B cell (primary cell): ENCODE measurements at regions of chr7 and their contacts with region 1.

Region 1: DNA sequence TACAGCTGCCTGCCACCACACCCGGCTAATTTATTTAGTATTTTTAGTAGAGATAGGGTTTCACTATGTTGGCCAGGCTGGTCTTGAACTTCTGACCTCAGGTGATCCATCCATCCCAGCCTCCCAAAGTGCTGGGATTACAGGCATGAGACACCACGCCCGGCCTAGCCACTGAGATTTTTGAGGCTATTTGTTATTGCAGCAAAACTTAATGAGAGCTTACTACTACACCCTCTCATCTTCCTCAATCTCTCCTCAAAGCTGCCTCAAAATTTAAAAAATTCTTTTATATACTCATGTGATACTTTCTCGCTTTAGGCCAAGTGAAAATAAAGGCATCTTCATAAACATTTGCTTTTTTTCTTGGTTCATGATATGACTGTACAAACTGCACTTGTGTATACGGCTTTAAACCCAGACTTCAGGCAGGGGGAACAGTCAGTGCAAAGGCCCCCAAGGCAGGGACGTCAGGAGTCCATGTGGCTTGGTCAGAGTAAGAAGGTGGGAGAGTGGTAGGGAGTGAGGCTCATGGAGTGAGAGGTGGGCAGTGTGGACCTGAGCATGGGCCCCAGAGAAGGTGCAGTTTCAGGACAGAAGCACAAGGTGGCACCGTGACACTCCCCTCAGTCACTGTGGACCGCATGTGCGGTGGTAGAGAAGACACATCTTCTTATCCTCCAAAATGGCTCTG is 55.5 kb downstream of the SYPL1 start:
- DNase-seq: peak; percentile 87
- ATAC-seq: peak; percentile 46
- H3K4me3 ChIP-seq: no peak overlapping the region
- H3K4me3 Mint-ChIP-seq: peak overlapping the region; percentile 73
- H3K27ac ChIP-seq: peak overlapping the region; percentile 89 to 94
- H3K27ac Mint-ChIP-seq: peak overlapping the region; percentile 96
- H3K4me1 ChIP-seq: peaks cover 51 to 58% of the 10 kb centered on the region in 2 donors
- H3K4me1 Mint-ChIP-seq: peaks cover 60% of the 10 kb centered on the region
- H3K27me3 ChIP-seq: no peaks in the 10 kb centered on the region
- H3K27me3 Mint-ChIP-seq: no peaks in the 10 kb centered on the region
- CTCF ChIP-seq: peak; percentile 81

Region 2: GRCh38 chr7:106071356-106071998 is 14.8 kb after region 1 on chr7:
- CTCF ChIA-PET with region 1: interaction called, 147 read pairs
- POLR2A ChIA-PET with region 1: interaction called, 148 read pairs
- intact Hi-C with region 1: loop called (anchors 1 kb)
- DNase-seq: peak; percentile 90
- ATAC-seq: peak; percentile 87
- H3K4me3 ChIP-seq: peak overlapping the region in 4 of 5 experiments; percentile 33 to 66 (median 45)
- H3K4me3 Mint-ChIP-seq: peak overlapping the region; percentile 85
- H3K27ac ChIP-seq: peak overlapping the region; percentile 95 to 97
- H3K27ac Mint-ChIP-seq: peak overlapping the region; percentile 99
- H3K4me1 ChIP-seq: peaks cover 96 to 100% of the 10 kb centered on the region in 2 donors
- H3K4me1 Mint-ChIP-seq: peaks cover 94% of the 10 kb centered on the region
- H3K27me3 ChIP-seq: no peaks in the 10 kb centered on the region
- H3K27me3 Mint-ChIP-seq: no peaks in the 10 kb centered on the region
- CTCF ChIP-seq: no peak

Region 3: GRCh38 chr7:106089647-106090046 is 33.0 kb after region 1 on chr7:
- CTCF ChIA-PET with region 1: interaction called, 185 read pairs
- POLR2A ChIA-PET with region 1: interaction called, 21 read pairs
- intact Hi-C with region 1: loop called (anchors 1 kb)
- DNase-seq: peak; percentile 53
- ATAC-seq: peak; percentile 87
- H3K4me3 ChIP-seq: peak overlapping the region in 1 of 5 experiments; percentile 28
- H3K4me3 Mint-ChIP-seq: peak overlapping the region; percentile 72
- H3K27ac ChIP-seq: peak overlapping the region; percentile 63 to 77
- H3K27ac Mint-ChIP-seq: peak overlapping the region; percentile 92
- H3K4me1 ChIP-seq: peaks cover 37 to 69% of the 10 kb centered on the region in 2 donors
- H3K4me1 Mint-ChIP-seq: peaks cover 77% of the 10 kb centered on the region
- H3K27me3 ChIP-seq: no peaks in the 10 kb centered on the region
- H3K27me3 Mint-ChIP-seq: no peaks in the 10 kb centered on the region
- CTCF ChIP-seq: no peak

Region 4: DNA sequence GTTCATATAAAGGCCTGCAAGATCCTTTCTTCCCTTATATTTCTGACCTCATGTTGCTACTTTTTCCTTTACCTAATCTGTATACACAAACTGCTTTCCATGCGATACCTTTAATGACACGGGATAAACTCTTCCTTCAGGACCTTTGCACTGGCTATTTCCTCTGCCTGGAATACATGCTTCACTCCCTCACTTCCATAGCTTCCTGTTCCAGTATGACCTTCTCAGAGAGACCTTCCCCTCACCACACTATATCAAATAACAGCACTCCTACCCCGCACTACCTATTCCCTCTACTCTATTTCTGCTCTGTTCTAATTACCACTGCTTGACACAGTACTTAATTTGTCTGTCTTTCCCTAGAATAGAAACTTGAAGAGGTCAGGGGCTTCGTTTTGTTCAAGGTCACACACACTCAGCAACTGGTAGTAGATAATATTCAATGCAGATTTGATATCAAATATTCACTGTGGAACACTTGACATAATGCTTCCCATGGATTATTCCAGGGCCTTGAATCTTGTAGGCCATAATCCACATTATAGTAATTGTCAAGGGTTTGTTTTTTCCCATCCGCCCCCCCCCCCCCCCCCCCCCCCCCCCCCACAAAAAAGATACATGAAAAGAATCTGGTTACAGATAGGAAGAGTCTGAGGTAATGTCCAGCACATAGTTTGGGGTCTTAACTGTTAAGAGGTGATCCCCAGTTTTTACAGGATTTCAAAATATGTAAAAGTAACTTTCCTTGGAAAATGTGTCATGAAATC is 44.4 kb after region 1 on chr7:
- CTCF ChIA-PET with region 1: interaction called, 185 read pairs
- POLR2A ChIA-PET with region 1: interaction called, 21 read pairs
- intact Hi-C with region 1: no loop called
- DNase-seq: no peak
- ATAC-seq: no peak
- H3K4me3 ChIP-seq: no peak overlapping the region
- H3K4me3 Mint-ChIP-seq: peak overlapping the region; percentile 5
- H3K27ac ChIP-seq: peak overlapping the region in 1 of 2 donors; percentile 69
- H3K27ac Mint-ChIP-seq: peak overlapping the region; percentile 32
- H3K4me1 ChIP-seq: peaks cover 54 to 71% of the 10 kb centered on the region in 2 donors
- H3K4me1 Mint-ChIP-seq: peaks cover 76% of the 10 kb centered on the region
- H3K27me3 ChIP-seq: no peaks in the 10 kb centered on the region
- H3K27me3 Mint-ChIP-seq: no peaks in the 10 kb centered on the region
- CTCF ChIP-seq: no peak

Region 5: GRCh38 chr7:106117786-106118544 is 61.3 kb after region 1 on chr7:
- CTCF ChIA-PET with region 1: interaction called, 63 read pairs
- POLR2A ChIA-PET with region 1: interaction called, 37 read pairs
- intact Hi-C with region 1: no loop called
- DNase-seq: no peak
- ATAC-seq: no peak
- H3K4me3 ChIP-seq: no peak overlapping the region
- H3K4me3 Mint-ChIP-seq: no peak overlapping the region
- H3K27ac ChIP-seq: peak overlapping the region in 1 of 2 donors; percentile 86
- H3K27ac Mint-ChIP-seq: peak overlapping the region; percentile 92
- H3K4me1 ChIP-seq: peaks cover 48 to 49% of the 10 kb centered on the region in 2 donors
- H3K4me1 Mint-ChIP-seq: peaks cover 54% of the 10 kb centered on the region
- H3K27me3 ChIP-seq: no peaks in the 10 kb centered on the region
- H3K27me3 Mint-ChIP-seq: no peaks in the 10 kb centered on the region
- CTCF ChIP-seq: no peak

Region 6: DNA sequence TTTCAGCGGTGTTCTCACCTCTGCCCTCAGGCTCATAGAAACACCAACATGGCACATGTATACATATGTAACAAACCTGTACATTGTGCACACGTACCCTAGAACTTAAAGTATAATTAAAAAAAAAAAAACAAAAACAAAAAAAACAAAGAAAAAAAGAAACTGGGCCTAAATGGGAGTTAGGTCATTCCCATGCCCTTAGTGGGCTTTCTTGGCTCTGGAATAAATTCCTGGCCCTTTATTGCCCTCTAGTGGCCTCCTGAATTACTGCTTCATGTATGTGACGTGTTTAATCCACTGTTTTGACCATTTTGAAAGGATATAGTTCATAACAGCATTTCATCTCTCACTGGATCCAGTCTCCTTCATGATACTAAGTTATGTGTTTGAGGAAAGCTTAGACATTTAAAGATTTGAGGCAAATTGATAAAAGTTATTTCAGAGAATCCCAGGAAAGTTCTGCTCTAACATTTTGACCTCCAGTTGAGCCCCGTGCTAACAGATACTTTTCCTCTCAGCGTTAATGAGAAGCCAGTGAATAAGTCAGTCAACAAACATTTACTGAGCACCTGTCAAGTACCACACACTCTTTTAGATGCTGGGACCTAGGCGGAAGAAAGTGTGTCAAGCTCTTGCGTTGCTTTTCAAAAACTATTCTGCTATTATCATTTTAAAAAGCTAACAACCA is 110.1 kb after region 1 on chr7:
- CTCF ChIA-PET with region 1: interaction called, 46 read pairs
- POLR2A ChIA-PET with region 1: interaction called, 7 read pairs
- intact Hi-C with region 1: loop called (anchors 1 kb)
- DNase-seq: peak; percentile 73
- ATAC-seq: peak; percentile 47
- H3K4me3 ChIP-seq: no peak overlapping the region
- H3K4me3 Mint-ChIP-seq: no peak overlapping the region
- H3K27ac ChIP-seq: no peak overlapping the region
- H3K27ac Mint-ChIP-seq: no peak overlapping the region
- H3K4me1 ChIP-seq: no peaks in the 10 kb centered on the region
- H3K4me1 Mint-ChIP-seq: peaks cover 10% of the 10 kb centered on the region
- H3K27me3 ChIP-seq: peaks cover 0 to 8% (median 0%) of the 10 kb centered on the region in 4 experiments
- H3K27me3 Mint-ChIP-seq: no peaks in the 10 kb centered on the region
- CTCF ChIP-seq: peak; percentile 95

Region 7: DNA sequence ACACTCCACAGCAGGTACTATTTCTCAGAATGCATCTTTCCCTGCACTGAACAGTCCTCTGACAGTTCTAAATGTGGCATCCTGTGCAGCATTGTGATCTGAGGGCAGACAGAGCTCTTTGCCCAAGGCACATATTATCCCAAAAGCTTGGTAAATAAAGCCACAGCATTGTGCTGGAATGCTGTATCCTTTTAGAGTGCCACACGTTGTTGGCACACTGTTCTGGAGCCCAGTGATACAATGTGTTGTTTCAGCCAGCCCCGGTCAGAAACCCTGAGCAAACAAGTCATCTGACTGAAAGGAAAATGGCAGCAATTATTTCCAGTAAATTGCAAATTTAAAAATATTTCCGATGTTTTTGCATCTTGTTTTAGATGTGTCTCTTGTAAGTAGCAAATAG is 182.7 kb after region 1 on chr7:
- CTCF ChIA-PET with region 1: no interaction called
- POLR2A ChIA-PET with region 1: no interaction called
- intact Hi-C with region 1: no loop called
- DNase-seq: no peak
- ATAC-seq: no peak
- H3K4me3 ChIP-seq: no peak overlapping the region
- H3K4me3 Mint-ChIP-seq: no peak overlapping the region
- H3K27ac ChIP-seq: no peak overlapping the region
- H3K27ac Mint-ChIP-seq: no peak overlapping the region
- H3K4me1 ChIP-seq: no peaks in the 10 kb centered on the region
- H3K4me1 Mint-ChIP-seq: no peaks in the 10 kb centered on the region
- H3K27me3 ChIP-seq: no peaks in the 10 kb centered on the region
- H3K27me3 Mint-ChIP-seq: peaks cover 6% of the 10 kb centered on the region
- CTCF ChIP-seq: no peak

Region 8: GRCh38 chr7:106461993-106462859 is 405.6 kb after region 1 on chr7:
- CTCF ChIA-PET with region 1: no interaction called
- POLR2A ChIA-PET with region 1: no interaction called
- intact Hi-C with region 1: loop called (anchors 10 kb)
- DNase-seq: peak; percentile 58
- ATAC-seq: peak; percentile 49
- H3K4me3 ChIP-seq: no peak overlapping the region
- H3K4me3 Mint-ChIP-seq: no peak overlapping the region
- H3K27ac ChIP-seq: no peak overlapping the region
- H3K27ac Mint-ChIP-seq: no peak overlapping the region
- H3K4me1 ChIP-seq: peaks cover 11 to 23% of the 10 kb centered on the region in 2 donors
- H3K4me1 Mint-ChIP-seq: peaks cover 15% of the 10 kb centered on the region
- H3K27me3 ChIP-seq: no peaks in the 10 kb centered on the region
- H3K27me3 Mint-ChIP-seq: no peaks in the 10 kb centered on the region
- CTCF ChIP-seq: peak; percentile 70

Region 9: GRCh38 chr7:106520962-106521940 is 464.6 kb after region 1 on chr7:
- CTCF ChIA-PET with region 1: no interaction called
- POLR2A ChIA-PET with region 1: no interaction called
- intact Hi-C with region 1: no loop called
- DNase-seq: no peak
- ATAC-seq: no peak
- H3K4me3 ChIP-seq: no peak overlapping the region
- H3K4me3 Mint-ChIP-seq: no peak overlapping the region
- H3K27ac ChIP-seq: no peak overlapping the region
- H3K27ac Mint-ChIP-seq: no peak overlapping the region
- H3K4me1 ChIP-seq: no peaks in the 10 kb centered on the region
- H3K4me1 Mint-ChIP-seq: no peaks in the 10 kb centered on the region
- H3K27me3 ChIP-seq: peaks cover 0 to 17% (median 10%) of the 10 kb centered on the region in 4 experiments
- H3K27me3 Mint-ChIP-seq: peaks cover 45% of the 10 kb centered on the region
- CTCF ChIP-seq: no peak